IMR-90 (cell line): ENCODE measurements at regions of chr14 and their contacts with region 1.

Region 1: DNA sequence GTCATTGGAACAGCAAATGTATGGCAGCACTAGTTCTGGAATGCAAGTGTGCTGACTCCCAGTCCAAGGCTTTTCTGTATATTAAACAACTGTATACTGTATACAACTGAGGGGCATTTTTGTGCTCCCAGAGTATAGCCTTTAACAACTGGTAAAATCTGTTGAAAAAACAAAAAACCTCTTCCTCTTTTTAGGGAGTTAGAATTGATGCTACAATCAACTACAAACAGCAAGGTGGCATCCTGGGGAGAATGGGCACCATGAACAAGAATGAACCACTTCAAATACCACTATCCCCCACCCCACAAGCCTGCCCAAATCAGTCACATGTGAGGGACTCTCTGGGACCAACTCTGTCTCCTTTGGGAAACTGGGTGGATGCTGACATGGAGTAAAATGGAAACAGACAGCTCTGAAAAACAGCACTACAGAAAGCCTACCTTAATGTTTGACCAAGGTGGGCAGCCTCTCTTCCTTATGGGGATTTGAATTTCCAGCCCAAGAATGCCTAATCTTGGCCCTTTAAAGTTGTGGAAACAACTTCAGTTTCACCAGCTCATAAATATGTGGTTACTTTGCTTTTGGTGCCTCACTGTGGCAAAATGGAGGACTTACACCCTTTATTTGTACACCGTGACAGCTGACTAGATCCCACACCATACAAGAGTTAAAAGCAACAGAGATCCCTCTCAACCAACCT is 7.5 kb downstream of the VTI1B start:
- DNase-seq: peak; percentile 72
- ATAC-seq: peak; percentile 89
- H3K4me3 ChIP-seq: no peak overlapping the region
- H3K27ac ChIP-seq: no peak overlapping the region
- H3K4me1 ChIP-seq: peaks cover 5% of the 10 kb centered on the region
- H3K27me3 ChIP-seq: no peaks in the 10 kb centered on the region
- CTCF ChIP-seq: peak; percentile 84
- POLR2A ChIP-seq: no peak
- RAD21 ChIP-seq: peak; percentile 88

Region 2: GRCh38 chr14:67426983-67427606 is 239.8 kb before region 1 on chr14:
- CTCF ChIA-PET with region 1: interaction called, 3 read pairs
- POLR2A ChIA-PET with region 1: no interaction called
- dilution Hi-C with region 1: no loop called
- in situ Hi-C with region 1: no loop called
- intact Hi-C with region 1: loop called (anchors 1 kb)
- DNase-seq: peak; percentile 76
- ATAC-seq: peak; percentile 95
- H3K4me3 ChIP-seq: no peak overlapping the region
- H3K27ac ChIP-seq: no peak overlapping the region
- H3K4me1 ChIP-seq: no peaks in the 10 kb centered on the region
- H3K27me3 ChIP-seq: peaks cover 7% of the 10 kb centered on the region; the same call in 1 of the 2 replicates
- CTCF ChIP-seq: peak; percentile 85
- POLR2A ChIP-seq: no peak
- RAD21 ChIP-seq: peak; percentile 86

Region 3: DNA sequence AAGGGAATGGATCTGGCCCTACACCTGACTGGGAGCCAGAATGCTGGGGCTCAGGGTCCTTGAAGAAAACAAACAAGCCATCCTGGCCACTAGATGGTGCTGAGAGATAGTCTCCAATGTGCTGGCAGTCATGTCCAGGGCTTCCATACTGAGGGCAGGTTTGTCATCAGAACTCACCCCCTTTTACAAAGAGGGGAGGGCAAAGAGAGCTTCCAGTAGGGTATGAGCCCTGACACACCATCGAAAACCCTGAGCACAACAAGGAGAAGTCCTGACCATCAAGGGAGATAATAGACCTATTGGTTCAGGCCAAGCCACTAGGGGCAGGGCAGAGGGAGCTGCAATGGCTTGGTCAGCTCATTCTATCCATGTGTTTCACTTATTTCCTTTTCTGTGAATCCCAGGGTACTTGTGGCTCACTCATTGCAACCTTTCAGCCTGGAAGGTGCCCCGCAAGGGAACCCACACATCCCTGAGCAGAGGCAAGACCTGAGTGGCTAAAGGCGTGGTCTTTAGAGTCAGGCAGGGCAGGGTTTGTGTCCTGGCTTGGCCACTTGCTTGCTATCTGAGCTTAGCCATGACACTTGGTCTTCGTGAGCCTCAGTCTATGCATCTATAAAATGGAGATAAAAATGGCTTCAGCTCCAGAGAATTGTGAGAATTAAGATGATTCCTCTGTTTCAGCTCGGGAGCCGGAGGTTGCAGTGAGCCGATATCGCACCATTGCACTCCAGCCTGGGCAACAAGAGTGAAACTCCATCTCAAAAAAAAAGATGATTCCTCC is 140.0 kb before region 1 on chr14:
- CTCF ChIA-PET with region 1: interaction called, 3 read pairs
- POLR2A ChIA-PET with region 1: no interaction called
- dilution Hi-C with region 1: no loop called
- in situ Hi-C with region 1: no loop called
- intact Hi-C with region 1: loop called (anchors 5 kb)
- DNase-seq: peak; percentile 45
- ATAC-seq: peak; percentile 80
- H3K4me3 ChIP-seq: no peak overlapping the region
- H3K27ac ChIP-seq: no peak overlapping the region
- H3K4me1 ChIP-seq: no peaks in the 10 kb centered on the region
- H3K27me3 ChIP-seq: peaks cover 50% of the 10 kb centered on the region
- CTCF ChIP-seq: peak; percentile 53
- POLR2A ChIP-seq: no peak
- RAD21 ChIP-seq: peak; percentile 59

Region 4: GRCh38 chr14:67583711-67584644 is 82.9 kb before region 1 on chr14:
- CTCF ChIA-PET with region 1: interaction called, 3 read pairs
- POLR2A ChIA-PET with region 1: no interaction called
- dilution Hi-C with region 1: no loop called
- in situ Hi-C with region 1: no loop called
- intact Hi-C with region 1: loop called (anchors 1 kb)
- DNase-seq: peak; percentile 52
- ATAC-seq: peak; percentile 94
- H3K4me3 ChIP-seq: no peak overlapping the region
- H3K27ac ChIP-seq: no peak overlapping the region
- H3K4me1 ChIP-seq: no peaks in the 10 kb centered on the region
- H3K27me3 ChIP-seq: peaks cover 4% of the 10 kb centered on the region; the same call in 1 of the 2 replicates
- CTCF ChIP-seq: peak; percentile 72
- POLR2A ChIP-seq: no peak
- RAD21 ChIP-seq: peak; percentile 85

Region 5: GRCh38 chr14:67599698-67600561 is 67.0 kb before region 1 on chr14 and contains the start of gene PIGH:
- CTCF ChIA-PET with region 1: interaction called, 3 read pairs
- POLR2A ChIA-PET with region 1: no interaction called
- dilution Hi-C with region 1: no loop called
- in situ Hi-C with region 1: no loop called
- intact Hi-C with region 1: loop called (anchors 5 kb)
- DNase-seq: peak; percentile 80
- ATAC-seq: peak; percentile 99
- H3K4me3 ChIP-seq: peak within 1 kb of the TSS; percentile 67
- H3K27ac ChIP-seq: peak within 1 kb of the TSS; percentile 85
- H3K4me1 ChIP-seq: no peaks in the 10 kb centered on the region
- H3K27me3 ChIP-seq: no peaks in the 10 kb centered on the region
- CTCF ChIP-seq: peak; percentile 68
- POLR2A ChIP-seq: no peak
- RAD21 ChIP-seq: peak; percentile 25; the same call in 1 of the 2 replicates
- total RNA-seq, gene PIGH: 6.7 and 7.9 TPM in 2 replicates

Region 6: GRCh38 chr14:67619446-67620216 is 47.3 kb before region 1 on chr14 and contains the start of gene ARG2:
- CTCF ChIA-PET with region 1: interaction called, 18 read pairs
- POLR2A ChIA-PET with region 1: no interaction called
- dilution Hi-C with region 1: no loop called
- in situ Hi-C with region 1: loop called (anchors 5 kb)
- intact Hi-C with region 1: loop called (anchors 1 kb)
- DNase-seq: peak; percentile 91
- ATAC-seq: peak; percentile 91
- H3K4me3 ChIP-seq: peak within 1 kb of the TSS; percentile 47
- H3K27ac ChIP-seq: no peak within 1 kb of the TSS
- H3K4me1 ChIP-seq: peaks cover 3% of the 10 kb centered on the region; the same call in 1 of the 2 replicates
- H3K27me3 ChIP-seq: peaks cover 4% of the 10 kb centered on the region
- CTCF ChIP-seq: 0 out of 2 replicates have a peak, but pooled peaks have one; percentile 7
- POLR2A ChIP-seq: peak; percentile 61; the same call in 1 of the 2 replicates
- RAD21 ChIP-seq: no peak
- total RNA-seq, gene ARG2: 2.2 and 2.5 TPM in 2 replicates